IMR-90 (cell line): ENCODE measurements at regions of chr3 and their contacts with region 1.

Region 1: GRCh38 chr3:11509173-11510000 is 134.3 kb downstream of the VGLL4 start:
- DNase-seq: peak; percentile 96
- ATAC-seq: peak; percentile 91
- H3K4me3 ChIP-seq: no peak overlapping the region
- H3K27ac ChIP-seq: peak overlapping the region; percentile 93; the same call in 1 of the 2 replicates
- H3K4me1 ChIP-seq: peaks cover 22% of the 10 kb centered on the region
- H3K27me3 ChIP-seq: no peaks in the 10 kb centered on the region
- CTCF ChIP-seq: no peak; the same call in 1 of the 2 replicates
- POLR2A ChIP-seq: peak; percentile 45; the same call in 1 of the 2 replicates
- RAD21 ChIP-seq: peak; percentile 34

Region 2: GRCh38 chr3:11172105-11172690 is 337.2 kb before region 1 on chr3:
- CTCF ChIA-PET with region 1: no interaction called
- POLR2A ChIA-PET with region 1: no interaction called
- dilution Hi-C with region 1: no loop called
- in situ Hi-C with region 1: no loop called
- intact Hi-C with region 1: no loop called
- DNase-seq: peak; percentile 66
- ATAC-seq: peak; percentile 54
- H3K4me3 ChIP-seq: no peak overlapping the region
- H3K27ac ChIP-seq: peak overlapping the region; percentile 90; the same call in 1 of the 2 replicates
- H3K4me1 ChIP-seq: peaks cover 32% of the 10 kb centered on the region
- H3K27me3 ChIP-seq: no peaks in the 10 kb centered on the region
- CTCF ChIP-seq: no peak
- POLR2A ChIP-seq: no peak
- RAD21 ChIP-seq: no peak

Region 3: GRCh38 chr3:11530153-11530721 is 20.9 kb after region 1 on chr3:
- CTCF ChIA-PET with region 1: no interaction called
- POLR2A ChIA-PET with region 1: no interaction called
- dilution Hi-C with region 1: no loop called
- in situ Hi-C with region 1: no loop called
- intact Hi-C with region 1: loop called (anchors 2 kb)
- DNase-seq: peak; percentile 98
- ATAC-seq: peak; percentile 86
- H3K4me3 ChIP-seq: no peak overlapping the region
- H3K27ac ChIP-seq: peak overlapping the region; percentile 67
- H3K4me1 ChIP-seq: peaks cover 26% of the 10 kb centered on the region
- H3K27me3 ChIP-seq: no peaks in the 10 kb centered on the region
- CTCF ChIP-seq: peak; percentile 42
- POLR2A ChIP-seq: no peak
- RAD21 ChIP-seq: peak; percentile 65